Upper lobe of right lung (tissue), 1 donor: ENCODE measurements at regions of chr14 and their contacts with region 1.

Region 1: DNA sequence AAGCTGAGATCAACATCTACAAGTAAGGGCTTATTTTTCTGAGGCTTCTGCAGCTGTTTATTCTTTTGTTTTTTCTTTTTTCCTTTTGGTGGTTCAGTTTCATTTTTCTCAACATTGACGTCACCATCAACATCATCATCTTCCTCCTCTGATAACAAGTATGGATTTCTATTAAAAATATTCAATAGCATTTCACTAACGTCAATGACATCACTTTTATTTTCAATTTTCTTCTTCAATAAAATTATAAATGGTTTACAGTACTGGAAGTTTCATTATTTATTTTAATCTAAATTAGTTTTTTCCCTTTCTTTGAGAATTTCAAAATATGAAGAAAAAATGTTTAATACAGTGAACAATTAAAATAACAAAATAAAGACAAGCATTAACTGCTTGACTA is 23.9 kb downstream of the NEMF start:
- DNase-seq: no peak
- ATAC-seq: no peak
- H3K4me3 ChIP-seq: no peak overlapping the region
- H3K27ac ChIP-seq: no peak overlapping the region
- H3K4me1 ChIP-seq: no peaks in the 10 kb centered on the region
- H3K27me3 ChIP-seq: no peaks in the 10 kb centered on the region
- CTCF ChIP-seq: no peak

Region 2: DNA sequence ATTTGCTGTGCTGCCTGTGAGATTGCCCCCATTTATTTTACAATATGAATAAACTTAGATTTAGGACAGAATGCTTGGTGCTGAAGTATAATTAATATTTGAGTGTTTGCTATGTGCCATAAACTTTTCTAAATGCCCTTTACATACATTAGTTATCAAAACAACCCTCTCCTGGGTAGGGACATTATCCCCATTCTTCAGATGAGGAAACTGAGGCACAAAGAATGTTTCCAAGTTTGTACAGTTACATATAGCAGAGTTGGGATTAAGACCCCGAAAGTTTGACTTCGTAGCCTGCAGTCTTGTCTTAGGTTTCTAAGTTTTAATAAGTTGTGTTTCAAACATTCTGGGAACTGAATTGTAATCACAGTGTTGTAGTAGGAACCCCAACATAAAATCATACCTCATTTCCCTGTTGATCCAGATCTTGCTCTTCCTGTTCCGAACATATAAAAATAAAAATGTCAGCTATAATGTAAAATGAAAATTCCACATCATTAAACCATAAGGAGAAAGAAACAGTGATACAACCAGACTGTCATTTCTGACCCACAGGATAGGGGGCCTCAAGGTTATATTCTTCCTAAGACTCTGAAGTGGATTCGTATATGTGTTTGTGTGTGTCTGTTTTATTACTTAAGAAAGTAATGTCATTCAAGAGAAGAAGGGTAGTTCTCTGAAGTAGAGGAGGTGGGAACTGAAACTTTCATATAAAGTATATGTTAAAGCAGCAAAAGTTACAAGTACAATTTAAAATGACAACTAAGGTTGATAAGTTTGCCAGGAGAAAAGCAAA is 42.1 kb before region 1 on chr14:
- intact Hi-C with region 1: loop called (anchors 10 kb)
- DNase-seq: no peak
- ATAC-seq: no peak
- H3K4me3 ChIP-seq: no peak overlapping the region
- H3K27ac ChIP-seq: no peak overlapping the region
- H3K4me1 ChIP-seq: no peaks in the 10 kb centered on the region
- H3K27me3 ChIP-seq: no peaks in the 10 kb centered on the region
- CTCF ChIP-seq: no peak

Region 3: GRCh38 chr14:49971156-49972130 is 142.8 kb after region 1 on chr14:
- intact Hi-C with region 1: no loop called
- DNase-seq: no peak
- ATAC-seq: peak; percentile 54
- H3K4me3 ChIP-seq: no peak overlapping the region
- H3K27ac ChIP-seq: peak overlapping the region; percentile 81
- H3K4me1 ChIP-seq: peaks cover 43% of the 10 kb centered on the region
- H3K27me3 ChIP-seq: no peaks in the 10 kb centered on the region
- CTCF ChIP-seq: no peak